CD14-positive monocyte (primary cell): ENCODE measurements at regions of chr10 and their contacts with region 1.

Region 1: GRCh38 chr10:79615577-79615976 is 4.8 kb downstream of the SFTPA1 start:
- DNase-seq: no peak
- H3K4me3 ChIP-seq: no peak overlapping the region
- H3K4me3 Mint-ChIP-seq: no peak overlapping the region
- H3K27ac ChIP-seq: no peak overlapping the region
- H3K27ac Mint-ChIP-seq: no peak overlapping the region
- H3K4me1 ChIP-seq: no peaks in the 10 kb centered on the region
- H3K4me1 Mint-ChIP-seq: no peaks in the 10 kb centered on the region
- H3K27me3 ChIP-seq: no peaks in the 10 kb centered on the region
- H3K27me3 Mint-ChIP-seq: peaks cover 5 to 7% (median 6%) of the 10 kb centered on the region in 3 donors
- CTCF ChIP-seq: no peak

Region 2: GRCh38 chr10:79555354-79556309 is 59.9 kb before region 1 on chr10:
- intact Hi-C with region 1: loop called in 1 of 2 experiments (anchors 2 kb)
- DNase-seq: no peak
- H3K4me3 ChIP-seq: no peak overlapping the region
- H3K4me3 Mint-ChIP-seq: no peak overlapping the region
- H3K27ac ChIP-seq: no peak overlapping the region
- H3K27ac Mint-ChIP-seq: no peak overlapping the region
- H3K4me1 ChIP-seq: no peaks in the 10 kb centered on the region
- H3K4me1 Mint-ChIP-seq: no peaks in the 10 kb centered on the region
- H3K27me3 ChIP-seq: no peaks in the 10 kb centered on the region
- H3K27me3 Mint-ChIP-seq: peaks cover 0 to 5% (median 1%) of the 10 kb centered on the region in 3 donors
- CTCF ChIP-seq: no peak

Region 3: GRCh38 chr10:79588800-79589199 is 26.8 kb before region 1 on chr10:
- intact Hi-C with region 1: no loop called
- DNase-seq: no peak
- H3K4me3 ChIP-seq: no peak overlapping the region
- H3K4me3 Mint-ChIP-seq: no peak overlapping the region
- H3K27ac ChIP-seq: no peak overlapping the region
- H3K27ac Mint-ChIP-seq: no peak overlapping the region
- H3K4me1 ChIP-seq: no peaks in the 10 kb centered on the region
- H3K4me1 Mint-ChIP-seq: no peaks in the 10 kb centered on the region
- H3K27me3 ChIP-seq: no peaks in the 10 kb centered on the region
- H3K27me3 Mint-ChIP-seq: peaks cover 0 to 10% (median 6%) of the 10 kb centered on the region in 3 donors
- CTCF ChIP-seq: no peak